Psoas muscle (tissue), 8 donors: ENCODE measurements at regions of chr3 and their contacts with region 1.

Region 1: GRCh38 chr3:144770915-144771351 is 799.3 kb downstream of the DIPK2A start:
- DNase-seq: no peak
- ATAC-seq: peak; percentile 67 to 76 (median 71)
- H3K4me3 ChIP-seq: no peak overlapping the region
- H3K27ac ChIP-seq: no peak overlapping the region
- H3K4me1 ChIP-seq: peaks cover 26% of the 10 kb centered on the region
- H3K27me3 ChIP-seq: no peaks in the 10 kb centered on the region
- CTCF ChIP-seq: peak; percentile 44

Region 2: DNA sequence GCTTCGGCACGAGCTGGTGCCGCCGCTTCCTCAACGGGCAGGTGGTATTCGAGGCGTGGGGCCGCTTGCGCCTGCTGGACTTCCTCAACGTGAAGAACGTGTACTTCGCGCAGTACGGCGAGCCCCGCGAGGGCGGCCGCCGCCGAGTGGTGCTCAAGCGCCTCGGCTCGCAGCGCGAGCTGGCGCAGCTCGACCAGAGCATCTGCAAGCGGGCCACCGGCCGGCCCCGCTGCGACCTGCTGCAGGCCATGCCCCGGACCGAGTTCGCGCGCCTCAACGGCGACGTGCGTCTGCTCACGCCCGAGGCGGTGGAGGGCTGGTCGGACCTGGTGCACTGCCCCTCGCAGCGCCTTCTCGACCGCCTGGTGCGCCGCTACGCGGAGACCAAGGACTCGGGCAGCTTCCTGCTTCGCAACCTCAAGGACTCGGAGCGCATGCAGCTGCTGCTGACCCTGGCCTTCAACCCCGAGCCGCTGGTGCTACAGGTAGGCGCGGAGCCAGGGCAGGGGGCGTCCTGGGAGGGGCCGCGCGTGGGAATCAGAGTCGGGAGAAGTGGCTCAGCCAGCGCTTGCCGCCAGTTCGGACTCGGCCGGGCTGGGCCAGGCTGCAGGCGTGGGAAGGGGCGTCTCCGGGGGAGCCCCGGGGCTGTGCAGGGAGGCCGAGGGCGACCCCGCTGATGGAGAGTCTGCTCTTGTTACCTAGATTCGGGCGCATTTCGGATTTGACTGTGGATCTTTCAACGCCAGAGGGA is 798.3 kb before region 1 on chr3:
- intact Hi-C with region 1: loop called in 1 of 2 experiments (anchors 5 kb)
- DNase-seq: peak; percentile 74 to 84
- ATAC-seq: peak; percentile 45 to 57 (median 54)
- H3K4me3 ChIP-seq: peak overlapping the region; percentile 77
- H3K27ac ChIP-seq: peak overlapping the region; percentile 92
- H3K4me1 ChIP-seq: peaks cover 30% of the 10 kb centered on the region
- H3K27me3 ChIP-seq: no peaks in the 10 kb centered on the region
- CTCF ChIP-seq: peak; percentile 39